Left cardiac atrium (tissue), 4 donors: ENCODE measurements at regions of chr20 and their contacts with region 1.

Region 1: GRCh38 chr20:53578492-53579222 is 15.0 kb downstream of the ZNF217 start:
- DNase-seq: no peak
- ATAC-seq: peak; percentile 72 to 82

Region 2: DNA sequence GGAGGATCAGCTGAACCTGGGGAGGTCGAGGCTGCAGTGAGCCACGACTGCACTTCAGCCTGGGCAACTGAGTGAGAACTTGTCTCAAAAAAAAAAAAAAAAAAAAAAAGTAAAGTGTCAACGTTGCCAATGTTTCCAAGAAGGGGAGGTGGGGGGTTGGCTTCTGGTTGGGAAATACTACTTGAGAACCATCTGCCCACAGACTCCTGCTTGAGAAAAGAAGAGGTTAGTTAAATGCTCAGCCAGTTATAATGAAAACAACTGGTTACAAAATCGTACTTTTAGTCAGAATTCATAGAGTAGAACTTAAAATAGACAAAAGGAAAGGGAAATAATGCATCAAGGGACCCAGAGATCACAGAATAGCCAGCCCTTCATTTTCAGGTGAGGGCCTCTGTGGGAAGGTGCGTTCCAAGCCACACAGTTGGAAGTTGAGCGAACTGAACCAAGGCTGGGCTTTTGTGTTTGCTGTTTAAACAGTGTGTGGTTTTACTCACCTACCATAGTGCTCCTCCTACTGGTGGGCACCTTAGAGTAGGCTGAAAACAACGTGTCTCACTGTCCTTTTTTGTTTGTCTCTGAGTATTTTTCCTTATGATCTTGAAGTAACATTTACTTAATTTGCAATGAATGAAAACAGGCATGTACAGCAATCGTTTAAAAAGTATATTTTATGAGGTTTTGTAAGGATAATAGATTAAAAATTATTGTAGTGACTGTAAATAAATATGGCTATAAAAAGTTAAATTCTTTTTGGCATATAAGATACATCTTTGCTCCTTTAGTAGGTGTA is 291.0 kb after region 1 on chr20:
- intact Hi-C with region 1: loop called in 1 of 2 experiments (anchors 2 kb)
- DNase-seq: peak; percentile 56
- ATAC-seq: peak; percentile 88 to 90

Region 3: GRCh38 chr20:53915446-53916172 is 337.0 kb after region 1 on chr20:
- intact Hi-C with region 1: loop called (anchors 5 kb)
- DNase-seq: peak; percentile 95
- ATAC-seq: peak; percentile 91 to 93

Region 4: DNA sequence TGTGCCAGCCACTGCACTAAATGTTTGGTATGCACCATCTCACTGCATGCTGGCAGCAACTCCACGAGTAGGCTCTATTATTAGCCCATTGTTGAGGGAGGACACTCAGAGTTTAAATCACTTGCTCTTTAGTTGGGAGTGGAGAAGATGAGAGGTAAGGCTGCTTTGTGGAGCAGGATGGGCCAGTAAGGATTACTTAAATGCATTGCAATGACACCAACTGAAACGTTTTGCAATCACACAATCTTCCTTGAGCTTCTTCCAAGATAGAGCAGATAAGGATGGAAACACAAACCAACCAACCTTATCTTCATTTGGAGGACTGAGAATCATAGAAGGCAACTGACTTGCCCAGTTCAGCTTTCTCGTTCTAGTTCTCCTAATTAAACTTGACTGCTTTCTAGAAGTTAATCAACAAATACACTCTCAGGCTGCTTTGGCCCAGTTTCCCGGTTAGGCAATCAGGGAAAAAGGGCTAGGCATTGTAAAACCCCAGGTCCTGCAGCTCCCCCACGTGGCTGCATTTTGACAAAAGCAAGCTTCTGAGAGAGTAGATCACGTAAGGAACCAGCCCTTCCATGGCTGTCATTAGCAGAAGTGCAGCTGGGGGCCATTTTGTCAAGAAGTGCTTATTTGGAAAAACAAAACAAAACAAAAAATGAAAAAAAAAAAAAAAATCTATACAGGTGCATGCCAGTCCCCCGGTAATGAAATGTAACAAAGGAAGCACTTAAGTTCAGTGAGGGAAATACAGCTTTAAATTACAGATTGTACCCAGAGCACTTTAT is 361.1 kb after region 1 on chr20:
- intact Hi-C with region 1: loop called (anchors 2 to 5 kb)
- DNase-seq: peak; percentile 93
- ATAC-seq: peak; percentile 90 to 91

Region 5: DNA sequence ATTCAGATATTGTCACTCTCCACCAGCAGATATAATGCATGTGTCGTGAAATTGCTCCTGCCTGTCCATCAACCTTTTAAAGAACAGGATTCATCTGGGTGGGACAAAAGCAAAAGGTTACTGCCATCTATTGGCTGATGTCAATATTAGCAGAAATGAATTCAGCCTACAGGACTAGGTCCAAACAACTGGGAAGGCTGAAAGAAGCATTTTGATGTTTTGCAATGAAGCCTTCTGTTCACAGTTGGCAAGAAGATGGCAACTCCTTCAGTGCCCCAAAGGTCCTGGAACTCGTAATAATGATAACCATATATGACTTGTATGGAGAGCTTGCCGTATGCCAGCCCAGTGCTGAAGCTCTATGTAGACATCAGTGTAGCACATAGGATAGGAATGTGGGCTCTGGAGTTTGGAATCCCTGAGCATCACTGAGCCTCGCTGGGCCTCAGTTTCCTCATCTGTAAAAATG is 484.2 kb after region 1 on chr20:
- intact Hi-C with region 1: loop called in 1 of 2 experiments (anchors 10 kb)
- DNase-seq: no peak
- ATAC-seq: peak; percentile 44 to 79